K562 (cell line): ENCODE measurements at regions of chr20 and their contacts with region 1.

Region 1: DNA sequence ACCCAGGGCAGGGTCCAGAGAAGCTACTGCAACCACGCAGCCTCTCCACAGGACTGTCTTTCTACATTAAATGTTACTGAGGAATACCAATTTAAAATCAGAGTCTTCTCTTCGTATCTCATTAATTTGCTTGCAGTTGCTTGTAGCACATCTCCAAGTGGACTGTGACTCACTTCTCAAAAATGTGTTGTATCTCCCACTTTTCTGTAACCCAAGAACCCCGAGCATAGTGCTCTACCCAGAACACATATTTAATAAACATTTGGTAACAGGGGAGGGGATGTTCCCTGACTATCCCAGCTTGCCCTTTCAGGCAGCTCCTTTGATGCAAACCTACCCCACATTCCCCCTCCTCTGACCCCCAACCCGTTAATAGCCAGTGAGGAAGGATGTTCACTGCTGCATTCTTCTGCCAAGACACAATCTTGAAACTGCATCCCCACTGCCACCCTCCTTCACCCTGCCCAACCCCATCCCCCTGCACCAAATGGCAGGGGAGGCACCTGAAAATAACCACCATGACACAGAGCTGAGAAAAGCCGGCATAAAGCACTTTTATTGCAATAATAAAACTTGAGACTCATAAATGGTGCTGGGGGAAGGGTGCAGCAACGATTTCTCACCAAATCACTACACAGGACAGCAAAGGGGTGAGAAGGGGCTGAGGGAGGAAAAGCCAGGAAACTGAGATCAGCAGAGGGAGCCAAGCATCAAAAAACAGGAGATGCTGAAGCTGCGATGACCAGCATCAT is 24.2 kb downstream of the FKBP1A start:
- DNase-seq: no peak
- ATAC-seq: no peak
- H3K4me3 ChIP-seq: no peak overlapping the region
- H3K27ac ChIP-seq: no peak overlapping the region
- H3K4me1 ChIP-seq: peaks cover 0 to 4% of the 10 kb centered on the region in 2 experiments; a peak in 2 of 5 replicates
- H3K27me3 ChIP-seq: no peaks in the 10 kb centered on the region
- CTCF ChIP-seq: no peak
- EP300 ChIP-seq: no peak
- POLR2A ChIP-seq: no peak
- RAD21 ChIP-seq: no peak

Region 2: DNA sequence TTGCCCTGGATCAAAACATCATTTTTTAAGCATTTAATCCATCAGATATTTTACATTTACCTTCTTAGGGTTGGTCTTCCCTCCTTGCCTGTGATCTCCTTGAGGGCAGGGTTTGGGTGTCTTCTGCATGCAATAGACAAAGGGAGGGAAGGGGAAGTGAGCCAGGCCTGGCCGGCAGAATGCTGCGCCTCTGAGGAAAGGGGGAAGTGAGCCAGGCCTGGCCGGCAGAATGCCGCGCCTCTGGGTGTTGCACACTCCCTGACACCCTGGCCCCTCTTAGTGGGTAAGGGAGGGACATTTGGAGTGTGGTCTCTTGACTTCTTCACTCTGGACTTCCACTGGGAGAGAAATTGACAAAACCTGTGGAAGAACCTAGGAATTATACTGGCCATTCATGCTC is 237.8 kb before region 1 on chr20:
- CTCF ChIA-PET with region 1: no interaction called
- POLR2A ChIA-PET with region 1: no interaction called
- in situ Hi-C with region 1: no loop called
- intact Hi-C with region 1: no loop called
- DNase-seq: no peak
- ATAC-seq: no peak
- H3K4me3 ChIP-seq: no peak overlapping the region
- H3K27ac ChIP-seq: no peak overlapping the region
- H3K4me1 ChIP-seq: no peaks in the 10 kb centered on the region; a peak in 1 of 5 replicates
- H3K27me3 ChIP-seq: no peaks in the 10 kb centered on the region
- CTCF ChIP-seq: no peak
- EP300 ChIP-seq: no peak
- POLR2A ChIP-seq: no peak
- RAD21 ChIP-seq: no peak

Region 3: DNA sequence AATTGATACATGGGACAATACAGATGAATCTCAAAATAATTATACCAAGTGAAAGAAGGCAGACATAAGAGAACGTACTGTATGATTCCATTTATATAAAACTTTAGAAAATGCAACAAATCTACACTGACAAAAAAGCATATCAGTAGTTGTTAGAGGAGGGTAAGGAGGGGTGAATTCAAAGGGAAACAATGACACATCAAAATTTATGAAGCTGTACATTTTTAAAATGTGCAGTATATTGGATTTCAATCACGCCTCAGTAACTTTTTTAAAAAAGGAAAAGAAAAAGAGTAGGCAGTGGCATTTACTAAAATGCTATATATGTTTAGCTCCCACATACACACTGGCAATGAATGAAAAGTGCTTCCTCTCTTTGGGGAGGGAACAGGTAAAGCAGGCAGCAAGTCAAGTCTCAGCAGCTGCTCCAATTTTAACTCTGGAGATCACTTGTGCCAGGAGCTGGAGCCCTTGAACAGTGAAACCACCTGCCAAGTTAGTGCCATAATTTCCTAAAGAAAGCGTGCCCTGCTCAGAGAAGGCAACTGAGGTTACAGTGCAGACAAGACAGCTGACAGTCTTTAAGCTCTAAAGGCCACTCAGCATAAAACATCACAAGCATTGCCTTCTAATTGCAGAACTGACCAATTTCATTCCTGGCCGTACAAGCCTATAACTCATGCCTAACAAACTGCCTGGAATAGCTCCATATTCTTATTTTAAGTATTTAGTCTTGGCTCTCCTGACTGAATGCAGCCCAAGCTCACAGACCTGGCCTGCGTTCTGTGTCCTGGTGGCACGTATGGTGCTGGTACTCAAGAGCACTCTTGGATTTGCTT is 13.3 kb after region 1 on chr20:
- CTCF ChIA-PET with region 1: no interaction called
- POLR2A ChIA-PET with region 1: interaction called, 3 read pairs
- in situ Hi-C with region 1: no loop called
- intact Hi-C with region 1: loop called (anchors 2 kb)
- DNase-seq: no peak
- ATAC-seq: peak; percentile 27; the same call in 2 of the 3 replicates
- H3K4me3 ChIP-seq: no peak overlapping the region
- H3K27ac ChIP-seq: peak overlapping the region; percentile 50; the same call in 2 of the 3 replicates
- H3K4me1 ChIP-seq: peaks cover 0 to 49% of the 10 kb centered on the region in 2 experiments; a peak in 3 of 5 replicates
- H3K27me3 ChIP-seq: no peaks in the 10 kb centered on the region
- CTCF ChIP-seq: no peak
- EP300 ChIP-seq: no peak
- POLR2A ChIP-seq: no peak
- RAD21 ChIP-seq: no peak

Region 4: DNA sequence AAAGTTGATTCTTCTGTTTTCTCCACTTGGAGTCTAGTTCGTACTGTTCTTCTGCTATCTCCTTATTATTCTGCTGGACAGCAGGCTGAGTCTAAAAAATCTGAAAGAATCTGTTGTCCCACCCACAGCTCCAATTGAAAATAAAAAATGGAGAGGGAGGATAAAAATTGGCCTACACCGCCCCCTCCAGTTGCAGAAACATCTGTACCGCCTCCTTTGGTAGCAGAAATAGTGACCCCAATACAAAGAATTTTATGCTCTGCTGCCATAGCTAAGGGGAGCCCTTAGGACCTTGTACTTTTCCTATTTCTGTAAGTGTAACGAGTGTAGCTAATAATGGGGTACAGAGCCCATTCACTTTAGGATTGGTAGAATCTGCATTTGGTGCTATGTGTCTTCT is 29.1 kb after region 1 on chr20:
- CTCF ChIA-PET with region 1: no interaction called
- POLR2A ChIA-PET with region 1: no interaction called
- in situ Hi-C with region 1: no loop called
- intact Hi-C with region 1: no loop called
- DNase-seq: peak in 1 of 4 experiments; percentile 24
- ATAC-seq: no peak
- H3K4me3 ChIP-seq: no peak overlapping the region
- H3K27ac ChIP-seq: no peak overlapping the region
- H3K4me1 ChIP-seq: peaks cover 0 to under 1% of the 10 kb centered on the region in 2 experiments; a peak in 2 of 5 replicates
- H3K27me3 ChIP-seq: peaks cover 0 to 6% of the 10 kb centered on the region in 2 experiments; a peak in 4 of 5 replicates
- CTCF ChIP-seq: peak in 2 of 3 experiments; percentile 59 to 61; a peak in 4 of 6 replicates
- EP300 ChIP-seq: no peak
- POLR2A ChIP-seq: no peak
- RAD21 ChIP-seq: peak in 1 of 2 experiments; percentile 40; a peak in 2 of 4 replicates

Region 5: GRCh38 chr20:1619861-1620444 is 251.3 kb after region 1 on chr20 and contains the start of gene SIRPB1:
- CTCF ChIA-PET with region 1: no interaction called
- POLR2A ChIA-PET with region 1: no interaction called
- in situ Hi-C with region 1: loop called (anchors 10 kb)
- intact Hi-C with region 1: no loop called
- DNase-seq: peak in 2 of 4 experiments; percentile 0
- ATAC-seq: no peak
- H3K4me3 ChIP-seq: no peak within 1 kb of the TSS
- H3K27ac ChIP-seq: no peak within 1 kb of the TSS
- H3K4me1 ChIP-seq: no peaks in the 10 kb centered on the region
- H3K27me3 ChIP-seq: peaks cover 0 to 4% of the 10 kb centered on the region in 2 experiments; a peak in 1 of 5 replicates
- CTCF ChIP-seq: no peak
- EP300 ChIP-seq: no peak
- POLR2A ChIP-seq: no peak
- RAD21 ChIP-seq: no peak
- polyA plus RNA-seq, gene SIRPB1: not detected